Activated CD4-positive, alpha-beta T cell treated with anti-CD3 and anti-CD28 coated beads for 36 hours (primary cell): ENCODE measurements at regions of chr17 and their contacts with region 1.

Region 1: GRCh38 chr17:76742958-76743357 is 5.0 kb downstream of the MFSD11 start:
- DNase-seq: no peak
- ATAC-seq: peak; percentile 65
- H3K4me3 Mint-ChIP-seq: no peak overlapping the region
- H3K27ac Mint-ChIP-seq: no peak overlapping the region
- H3K4me1 Mint-ChIP-seq: peaks cover 32% of the 10 kb centered on the region
- H3K27me3 Mint-ChIP-seq: no peaks in the 10 kb centered on the region

Region 2: DNA sequence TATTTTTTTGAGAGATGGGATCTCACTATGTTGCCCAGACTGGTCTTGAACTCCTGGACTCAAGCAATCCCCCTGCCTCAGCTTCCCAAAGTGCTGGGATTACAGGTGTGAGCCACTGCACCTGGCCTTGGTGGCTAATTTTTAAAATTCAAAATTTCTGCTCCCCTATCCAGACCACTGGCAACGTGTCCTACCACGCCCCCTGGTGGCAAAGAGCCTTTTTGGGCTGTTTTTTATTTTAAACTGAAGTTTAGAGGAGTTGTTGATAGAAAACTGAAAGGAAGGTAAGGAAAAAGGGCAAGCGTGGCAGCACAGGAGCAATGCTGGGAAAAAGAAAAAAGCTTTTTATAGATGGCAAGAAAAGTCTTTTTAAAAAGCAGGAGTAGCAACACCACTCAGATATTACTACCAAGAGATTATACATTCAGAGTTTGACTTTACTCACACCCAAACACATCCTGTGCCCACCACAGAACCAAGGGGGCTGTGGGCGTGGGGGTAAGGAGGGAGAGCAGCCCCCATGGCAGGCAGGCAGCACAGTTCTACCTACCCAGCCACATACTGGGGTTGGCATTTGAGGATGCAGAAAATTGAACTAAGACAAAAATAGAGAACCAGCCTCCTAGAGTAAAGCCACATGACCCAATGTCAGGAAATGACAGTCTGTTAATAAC is 28.0 kb before region 1 on chr17:
- CTCF ChIA-PET with region 1: interaction called, 12 read pairs
- POLR2A ChIA-PET with region 1: no interaction called
- intact Hi-C with region 1: no loop called
- DNase-seq: peak; percentile 87
- ATAC-seq: no peak
- H3K4me3 Mint-ChIP-seq: no peak overlapping the region
- H3K27ac Mint-ChIP-seq: peak overlapping the region; percentile 68
- H3K4me1 Mint-ChIP-seq: peaks cover 38% of the 10 kb centered on the region
- H3K27me3 Mint-ChIP-seq: no peaks in the 10 kb centered on the region